ENCODE measurements at regions of chr15 and their contacts with region 1.

Region 1: GRCh38 chr15:51776952-51777574 is 25.7 kb downstream of the TMOD2 start:
- DNase-seq: peak; percentile 79 to 90 (median 85)
- H3K4me3 ChIP-seq: no peak overlapping the region
- H3K27ac ChIP-seq: no peak overlapping the region
- H3K4me1 ChIP-seq: no peaks in the 10 kb centered on the region
- H3K27me3 ChIP-seq: no peaks in the 10 kb centered on the region

Region 2: GRCh38 chr15:51649659-51650521 is 127.2 kb before region 1 on chr15:
- CTCF ChIA-PET with region 1: interaction called, 134 read pairs
- POLR2A ChIA-PET with region 1: interaction called, 10 read pairs
- DNase-seq: peak; percentile 84 to 92 (median 88)
- H3K4me3 ChIP-seq: no peak overlapping the region
- H3K27ac ChIP-seq: no peak overlapping the region
- H3K4me1 ChIP-seq: peaks cover 0 to 17% (median 8%) of the 10 kb centered on the region in 4 experiments
- H3K27me3 ChIP-seq: no peaks in the 10 kb centered on the region

Region 3: GRCh38 chr15:51688863-51689262 is 88.2 kb before region 1 on chr15:
- CTCF ChIA-PET with region 1: interaction called, 18 read pairs
- POLR2A ChIA-PET with region 1: no interaction called
- DNase-seq: peak in 2 of 3 donors; percentile 23 to 38
- H3K4me3 ChIP-seq: no peak overlapping the region
- H3K27ac ChIP-seq: no peak overlapping the region
- H3K4me1 ChIP-seq: no peaks in the 10 kb centered on the region
- H3K27me3 ChIP-seq: peaks cover 0 to 13% (median 2%) of the 10 kb centered on the region in 5 experiments

Region 4: GRCh38 chr15:51718219-51718618 is 58.8 kb before region 1 on chr15:
- CTCF ChIA-PET with region 1: no interaction called
- POLR2A ChIA-PET with region 1: no interaction called
- DNase-seq: no peak
- H3K4me3 ChIP-seq: no peak overlapping the region
- H3K27ac ChIP-seq: no peak overlapping the region
- H3K4me1 ChIP-seq: no peaks in the 10 kb centered on the region
- H3K27me3 ChIP-seq: no peaks in the 10 kb centered on the region

Region 5: DNA sequence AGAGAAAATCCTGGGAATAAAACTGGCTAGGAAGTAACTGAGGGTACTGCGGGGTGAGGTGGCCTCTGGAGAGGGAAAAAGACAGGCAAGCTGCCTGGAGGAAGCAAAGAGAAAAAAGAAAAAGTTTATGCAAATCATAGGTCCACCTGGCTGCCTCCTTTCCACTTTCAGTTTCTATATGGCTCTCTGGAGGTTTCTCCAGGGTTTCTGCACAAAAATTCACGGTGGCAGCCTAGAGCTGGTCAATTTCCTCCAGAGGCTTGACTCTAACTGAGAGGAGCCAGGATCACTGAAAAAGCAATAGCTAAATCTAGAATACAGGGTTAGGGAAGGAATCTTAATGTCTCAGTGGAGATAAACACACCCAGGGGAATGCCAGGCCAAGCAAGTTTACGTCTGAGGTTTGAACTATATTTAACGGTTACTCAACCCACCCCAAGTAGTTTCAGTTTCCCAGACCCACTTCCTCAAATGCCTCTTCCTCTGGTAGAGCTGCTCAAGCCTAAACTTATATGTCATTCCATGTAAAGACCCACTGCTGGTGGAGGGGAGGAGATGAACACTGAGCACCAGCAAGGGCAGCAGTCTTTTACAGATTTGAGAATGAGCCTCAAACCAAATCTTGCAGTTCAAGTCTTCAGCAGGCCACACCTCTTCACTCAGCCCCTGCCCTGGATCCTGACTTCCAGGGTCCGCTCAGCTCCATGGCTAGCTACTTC is 45.4 kb before region 1 on chr15:
- CTCF ChIA-PET with region 1: interaction called, 18 read pairs
- POLR2A ChIA-PET with region 1: no interaction called
- DNase-seq: peak; percentile 85 to 95 (median 93)
- H3K4me3 ChIP-seq: peak overlapping the region in 6 of 7 experiments; percentile 61 to 91 (median 72)
- H3K27ac ChIP-seq: peak overlapping the region; percentile 68 to 86
- H3K4me1 ChIP-seq: peaks cover 60 to 97% (median 73%) of the 10 kb centered on the region in 4 experiments
- H3K27me3 ChIP-seq: no peaks in the 10 kb centered on the region

Region 6: GRCh38 chr15:51765751-51766150 is 11.3 kb before region 1 on chr15:
- CTCF ChIA-PET with region 1: interaction called, 17 read pairs
- POLR2A ChIA-PET with region 1: no interaction called
- DNase-seq: no peak
- H3K4me3 ChIP-seq: no peak overlapping the region
- H3K27ac ChIP-seq: no peak overlapping the region
- H3K4me1 ChIP-seq: peaks cover 0 to 7% (median 7%) of the 10 kb centered on the region in 4 experiments
- H3K27me3 ChIP-seq: no peaks in the 10 kb centered on the region

Region 7: DNA sequence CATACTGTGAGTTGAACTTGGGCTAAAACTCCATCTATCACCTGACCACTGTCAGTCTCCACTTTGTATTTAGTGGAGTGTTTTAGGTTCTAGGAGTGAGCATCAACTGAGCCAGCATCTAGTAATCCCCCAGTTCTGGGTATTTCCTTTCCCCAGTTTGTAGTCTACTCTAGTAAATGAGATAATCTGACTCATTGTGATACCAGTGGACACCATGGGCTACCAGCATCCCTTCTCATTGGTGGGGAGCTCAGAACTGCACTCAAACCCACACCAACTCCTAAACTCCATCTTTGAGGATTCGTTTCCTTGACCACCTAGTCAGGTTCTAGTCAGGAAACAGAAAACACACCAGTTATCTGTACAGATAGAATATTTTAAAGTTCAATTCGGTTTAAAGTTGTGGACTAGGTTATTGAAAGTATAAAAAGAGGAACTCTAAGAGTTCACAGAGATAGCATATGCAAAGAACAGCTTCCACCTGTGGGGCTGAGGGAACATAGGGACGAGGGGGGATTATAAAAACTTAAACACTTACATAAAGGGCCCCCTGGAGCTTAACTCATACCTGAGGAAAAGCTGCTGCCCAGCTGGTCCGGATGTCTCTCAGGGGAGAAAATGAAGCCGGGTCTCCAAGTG is 158.5 kb after region 1 on chr15:
- CTCF ChIA-PET with region 1: no interaction called
- POLR2A ChIA-PET with region 1: no interaction called
- DNase-seq: no peak
- H3K4me3 ChIP-seq: no peak overlapping the region
- H3K27ac ChIP-seq: no peak overlapping the region
- H3K4me1 ChIP-seq: no peaks in the 10 kb centered on the region
- H3K27me3 ChIP-seq: no peaks in the 10 kb centered on the region

Measured in common myeloid progenitor, CD34-positive (primary cell).